Uterus (tissue), 4 donors: ENCODE measurements at regions of chr1 and their contacts with region 1.

Region 1: GRCh38 chr1:100866041-100866900 is 28.4 kb downstream of the EXTL2 start:
- DNase-seq: no peak
- H3K4me3 ChIP-seq: no peak overlapping the region
- H3K27ac ChIP-seq: no peak overlapping the region
- H3K4me1 ChIP-seq: no peaks in the 10 kb centered on the region
- H3K27me3 ChIP-seq: no peaks in the 10 kb centered on the region
- CTCF ChIP-seq: peak; percentile 34 to 65 (median 44)
- POLR2A ChIP-seq: no peak

Region 2: DNA sequence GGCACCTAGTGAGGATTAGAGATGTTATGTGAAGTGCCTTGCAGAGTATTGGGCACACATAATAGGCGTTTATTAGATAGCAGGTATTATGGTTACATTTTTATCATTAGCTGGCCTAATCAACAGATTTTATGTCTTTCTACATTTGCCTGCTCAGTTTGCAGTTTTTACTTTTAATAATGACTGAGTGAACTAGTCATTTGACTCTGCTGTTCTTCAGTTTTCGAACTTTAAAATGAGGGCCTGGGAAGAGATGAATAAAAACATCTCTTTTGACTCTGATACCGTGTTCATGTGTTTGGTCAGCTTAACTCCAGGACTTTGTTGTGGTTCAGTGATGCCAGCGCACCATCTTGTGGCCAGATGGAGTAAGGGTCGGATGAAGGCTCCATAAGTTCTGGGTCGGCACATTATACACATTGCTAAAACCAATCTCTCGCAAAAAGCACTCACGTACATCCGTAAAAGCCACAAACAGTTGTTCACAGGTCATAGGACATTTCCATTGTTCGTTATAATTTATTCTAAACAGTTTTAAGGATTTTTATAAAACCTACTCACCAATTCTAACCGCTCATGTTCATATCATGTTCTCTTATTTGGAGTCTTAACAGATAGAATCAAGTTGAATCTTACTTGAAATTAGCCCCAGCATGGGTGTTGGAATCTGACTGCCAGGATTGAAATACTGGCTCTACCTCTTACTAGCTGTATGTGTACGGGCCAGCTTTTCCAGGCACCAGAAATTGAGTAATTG is 406.7 kb before region 1 on chr1:
- intact Hi-C with region 1: loop called (anchors 10 kb)
- DNase-seq: peak; percentile 77 to 78
- H3K4me3 ChIP-seq: no peak overlapping the region
- H3K27ac ChIP-seq: peak overlapping the region; percentile 58
- H3K4me1 ChIP-seq: no peaks in the 10 kb centered on the region
- H3K27me3 ChIP-seq: no peaks in the 10 kb centered on the region
- CTCF ChIP-seq: peak; percentile 81 to 90 (median 85)
- POLR2A ChIP-seq: no peak

Region 3: DNA sequence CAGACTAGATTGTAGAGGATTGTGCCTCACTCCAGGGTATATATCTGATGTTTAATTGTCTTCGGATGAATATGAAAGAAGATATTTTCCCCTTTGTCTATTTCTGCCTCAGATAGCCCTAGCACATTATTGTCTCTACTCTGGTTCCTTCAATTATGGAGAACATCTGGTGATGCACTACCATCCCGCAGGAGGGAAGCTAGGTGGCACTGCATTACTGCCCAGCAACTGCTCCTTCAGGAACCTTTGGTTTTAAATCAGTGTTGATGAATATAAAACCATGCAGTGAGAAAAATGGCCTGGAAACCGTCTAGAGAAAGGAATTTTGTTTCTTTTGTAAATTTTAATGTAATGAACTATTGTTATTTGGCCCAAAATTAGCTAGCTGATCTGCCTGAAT is 259.8 kb before region 1 on chr1:
- intact Hi-C with region 1: loop called (anchors 10 kb)
- DNase-seq: peak in 1 of 2 donors; percentile 27
- H3K4me3 ChIP-seq: no peak overlapping the region
- H3K27ac ChIP-seq: no peak overlapping the region
- H3K4me1 ChIP-seq: no peaks in the 10 kb centered on the region
- H3K27me3 ChIP-seq: no peaks in the 10 kb centered on the region
- CTCF ChIP-seq: peak; percentile 49 to 76 (median 65)
- POLR2A ChIP-seq: no peak